ENCODE measurements at regions of chr6 and their contacts with region 1.

Region 1: GRCh38 chr6:113994918-113995342 is 24.0 kb upstream of the HDAC2 start:
- DNase-seq: peak; percentile 80
- H3K4me3 Mint-ChIP-seq: no peak overlapping the region
- H3K27ac Mint-ChIP-seq: peak overlapping the region; percentile 13
- H3K4me1 Mint-ChIP-seq: peaks cover 36% of the 10 kb centered on the region
- H3K27me3 Mint-ChIP-seq: no peaks in the 10 kb centered on the region
- CTCF ChIP-seq: peak; percentile 74

Region 2: GRCh38 chr6:114064862-114065261 is 69.9 kb after region 1 on chr6:
- CTCF ChIA-PET with region 1: interaction called, 10 read pairs
- intact Hi-C with region 1: loop called (anchors 5 kb)
- DNase-seq: no peak
- H3K4me3 Mint-ChIP-seq: no peak overlapping the region
- H3K27ac Mint-ChIP-seq: no peak overlapping the region
- H3K4me1 Mint-ChIP-seq: peaks cover 10% of the 10 kb centered on the region
- H3K27me3 Mint-ChIP-seq: no peaks in the 10 kb centered on the region
- CTCF ChIP-seq: no peak

Region 3: DNA sequence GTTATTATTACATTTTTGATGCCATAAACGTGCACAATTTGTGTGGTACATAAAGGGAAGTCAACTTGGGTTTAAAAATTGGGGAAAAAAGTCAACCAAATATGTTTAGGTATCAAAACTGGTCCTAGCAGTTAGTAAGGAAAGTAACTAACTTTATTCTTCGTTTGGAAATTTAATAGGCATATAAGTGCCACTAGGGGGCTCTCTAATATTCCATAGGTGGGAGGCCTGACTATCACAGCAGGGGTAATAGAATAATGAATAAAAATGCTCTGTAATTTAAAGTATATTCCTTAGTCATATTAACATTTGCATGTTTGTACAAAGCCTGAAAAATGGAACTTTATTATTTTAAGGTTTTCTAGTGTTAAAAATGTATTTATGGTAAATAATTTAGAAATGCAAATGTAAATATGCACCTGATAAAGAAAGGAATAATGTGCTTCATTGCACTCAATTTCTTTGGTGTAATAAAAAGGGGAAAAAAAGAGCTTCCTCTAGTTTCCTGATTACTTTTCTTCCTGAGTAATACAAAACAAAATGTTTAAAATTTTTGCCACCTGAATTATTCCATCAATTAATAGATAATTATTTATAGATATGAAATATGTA is 101.7 kb after region 1 on chr6:
- CTCF ChIA-PET with region 1: no interaction called
- intact Hi-C with region 1: loop called (anchors 2 kb)
- DNase-seq: peak; percentile 21
- H3K4me3 Mint-ChIP-seq: no peak overlapping the region
- H3K27ac Mint-ChIP-seq: no peak overlapping the region
- H3K4me1 Mint-ChIP-seq: peaks cover 10% of the 10 kb centered on the region
- H3K27me3 Mint-ChIP-seq: no peaks in the 10 kb centered on the region
- CTCF ChIP-seq: peak; percentile 54

Region 4: GRCh38 chr6:114108119-114109002 is 113.4 kb after region 1 on chr6:
- CTCF ChIA-PET with region 1: interaction called, 36 read pairs
- intact Hi-C with region 1: loop called (anchors 1 kb)
- DNase-seq: peak; percentile 84
- H3K4me3 Mint-ChIP-seq: no peak overlapping the region
- H3K27ac Mint-ChIP-seq: no peak overlapping the region
- H3K4me1 Mint-ChIP-seq: no peaks in the 10 kb centered on the region
- H3K27me3 Mint-ChIP-seq: no peaks in the 10 kb centered on the region
- CTCF ChIP-seq: peak; percentile 55

Region 5: GRCh38 chr6:114304304-114304887 is 309.5 kb after region 1 on chr6:
- CTCF ChIA-PET with region 1: interaction called, 18 read pairs
- intact Hi-C with region 1: loop called (anchors 1 kb)
- DNase-seq: no peak
- H3K4me3 Mint-ChIP-seq: no peak overlapping the region
- H3K27ac Mint-ChIP-seq: no peak overlapping the region
- H3K4me1 Mint-ChIP-seq: no peaks in the 10 kb centered on the region
- H3K27me3 Mint-ChIP-seq: no peaks in the 10 kb centered on the region
- CTCF ChIP-seq: peak; percentile 19

Region 6: GRCh38 chr6:114514153-114514552 is 519.2 kb after region 1 on chr6:
- CTCF ChIA-PET with region 1: no interaction called
- intact Hi-C with region 1: loop called (anchors 10 kb)
- DNase-seq: no peak
- H3K4me3 Mint-ChIP-seq: no peak overlapping the region
- H3K27ac Mint-ChIP-seq: no peak overlapping the region
- H3K4me1 Mint-ChIP-seq: no peaks in the 10 kb centered on the region
- H3K27me3 Mint-ChIP-seq: no peaks in the 10 kb centered on the region
- CTCF ChIP-seq: no peak

Measured in Calu3 (cell line).